ENCODE measurements at regions of chr2 and their contacts with region 1.

Region 1: DNA sequence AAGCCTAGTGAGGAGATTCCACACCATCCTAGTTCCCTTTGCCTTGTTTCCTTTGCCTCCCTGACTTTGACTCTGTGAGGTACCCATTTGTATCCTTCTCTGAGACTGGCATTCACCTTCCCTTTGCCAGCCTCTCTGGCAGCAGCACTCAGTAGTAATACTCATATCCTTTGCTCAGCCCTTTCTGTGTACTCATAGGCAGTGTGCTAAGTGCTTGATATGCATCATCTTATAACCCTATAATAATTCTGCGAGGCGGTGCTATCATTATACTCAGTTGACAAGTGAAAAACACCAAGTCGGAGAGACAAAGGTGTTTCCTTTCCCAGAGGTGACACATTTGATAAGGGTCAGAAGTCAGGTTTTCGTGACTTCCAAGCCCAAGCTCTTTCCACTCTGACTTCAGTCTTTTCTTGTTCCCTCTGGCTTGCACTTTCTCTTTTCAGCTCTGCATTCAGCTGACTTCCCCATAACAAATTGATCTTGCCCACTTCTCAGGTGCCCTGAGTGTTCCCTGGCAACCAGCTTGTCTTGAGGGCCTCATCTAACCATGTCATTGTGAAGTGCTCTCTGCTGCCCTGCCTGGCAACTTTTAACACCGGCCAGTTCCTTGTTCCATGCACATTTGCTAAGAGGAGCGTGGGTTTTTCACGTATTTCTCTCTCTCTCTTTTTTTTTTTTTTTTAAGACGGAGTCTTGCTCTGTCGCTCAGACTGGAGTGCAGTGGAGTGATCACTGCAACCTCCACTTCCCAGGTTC is 94.5 kb upstream of the UPP2 start:
- DNase-seq: no peak
- H3K4me3 ChIP-seq: no peak overlapping the region
- H3K27ac ChIP-seq: no peak overlapping the region
- H3K4me1 ChIP-seq: no peaks in the 10 kb centered on the region
- H3K27me3 ChIP-seq: no peaks in the 10 kb centered on the region
- CTCF ChIP-seq: no peak

Region 2: GRCh38 chr2:157489983-157490382 is 517.2 kb before region 1 on chr2:
- intact Hi-C with region 1: loop called (anchors 2 kb)
- DNase-seq: no peak
- H3K4me3 ChIP-seq: no peak overlapping the region
- H3K27ac ChIP-seq: no peak overlapping the region
- H3K4me1 ChIP-seq: no peaks in the 10 kb centered on the region
- H3K27me3 ChIP-seq: no peaks in the 10 kb centered on the region
- CTCF ChIP-seq: no peak

Region 3: DNA sequence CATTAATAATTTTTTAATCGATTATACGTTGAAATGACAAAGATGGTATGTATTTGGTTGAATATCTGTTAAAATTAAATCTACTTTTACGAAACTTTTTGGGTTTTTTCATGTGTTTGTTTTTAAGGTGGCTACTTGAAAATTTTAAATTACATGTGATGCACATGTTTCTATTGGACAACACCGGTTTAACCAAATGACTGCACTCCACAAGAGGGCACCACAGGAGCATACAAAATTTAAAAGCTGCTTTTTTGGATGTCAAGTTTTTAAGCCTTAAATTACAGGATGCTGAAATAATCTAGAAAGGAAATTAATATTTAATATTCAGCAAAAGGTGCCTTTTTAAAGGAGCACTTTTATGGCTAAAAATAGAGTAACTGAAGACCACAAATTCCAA is 229.7 kb before region 1 on chr2:
- intact Hi-C with region 1: loop called (anchors 1 kb)
- DNase-seq: peak in 1 of 2 donors; percentile 70
- H3K4me3 ChIP-seq: no peak overlapping the region
- H3K27ac ChIP-seq: no peak overlapping the region
- H3K4me1 ChIP-seq: peaks cover 0 to under 1% of the 10 kb centered on the region in 2 donors
- H3K27me3 ChIP-seq: no peaks in the 10 kb centered on the region
- CTCF ChIP-seq: peak; percentile 44 to 68 (median 61)

Region 4: DNA sequence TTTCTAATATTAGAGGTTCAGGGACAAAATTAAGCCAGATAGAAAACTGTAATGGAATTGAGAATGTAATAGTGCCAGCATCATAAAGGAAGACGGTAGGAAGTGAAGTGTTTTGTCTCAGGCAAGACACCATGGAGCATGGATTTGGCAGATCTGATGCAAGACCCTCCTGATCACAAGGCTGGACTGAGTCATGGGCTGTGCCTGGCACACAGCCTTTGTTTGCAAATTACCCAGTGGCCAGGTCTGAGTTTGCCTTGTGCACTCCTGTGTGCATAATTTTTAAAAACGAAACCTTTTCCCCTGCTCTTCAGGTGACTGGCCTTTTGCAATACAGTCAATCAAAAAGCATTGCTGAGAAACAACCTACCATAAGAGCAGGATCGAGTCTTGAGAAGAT is 92.6 kb after region 1 on chr2:
- intact Hi-C with region 1: no loop called
- DNase-seq: no peak
- H3K4me3 ChIP-seq: no peak overlapping the region
- H3K27ac ChIP-seq: no peak overlapping the region
- H3K4me1 ChIP-seq: no peaks in the 10 kb centered on the region
- H3K27me3 ChIP-seq: no peaks in the 10 kb centered on the region
- CTCF ChIP-seq: no peak